ENCODE measurements at regions of chr12 and their contacts with region 1.

Region 1: GRCh38 chr12:124321040-124321481 is 26.2 kb downstream of the RFLNA start:
- DNase-seq: peak; percentile 91
- H3K4me3 Mint-ChIP-seq: no peak overlapping the region
- H3K27ac Mint-ChIP-seq: no peak overlapping the region
- H3K4me1 Mint-ChIP-seq: no peaks in the 10 kb centered on the region
- H3K27me3 Mint-ChIP-seq: no peaks in the 10 kb centered on the region

Region 2: DNA sequence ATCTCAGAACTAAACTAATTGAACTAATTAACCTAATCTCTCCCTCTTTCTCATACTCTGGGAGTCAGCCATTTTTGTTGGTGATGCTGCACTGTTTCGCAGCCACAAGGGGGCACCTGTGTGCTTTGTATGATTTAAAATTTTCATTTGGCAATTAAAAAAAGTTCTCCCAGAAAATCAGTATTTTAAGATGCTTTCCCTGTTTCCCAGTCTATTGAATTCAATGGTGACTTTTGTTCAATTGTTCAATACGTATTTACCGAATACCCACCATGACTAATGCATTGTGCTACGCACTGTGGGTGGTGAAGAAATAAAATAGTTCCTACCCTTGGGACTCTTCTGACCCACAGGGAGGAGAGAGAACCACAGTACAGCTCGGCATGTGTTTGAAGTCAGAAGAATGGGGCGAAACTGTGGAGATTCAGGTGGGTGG is 284.4 kb before region 1 on chr12:
- intact Hi-C with region 1: loop called (anchors 1 kb)
- DNase-seq: peak; percentile 77
- H3K4me3 Mint-ChIP-seq: no peak overlapping the region
- H3K27ac Mint-ChIP-seq: no peak overlapping the region
- H3K4me1 Mint-ChIP-seq: no peaks in the 10 kb centered on the region
- H3K27me3 Mint-ChIP-seq: peaks cover 26% of the 10 kb centered on the region

Region 3: GRCh38 chr12:124162151-124162989 is 158.7 kb before region 1 on chr12:
- intact Hi-C with region 1: loop called (anchors 1 kb)
- DNase-seq: peak; percentile 58
- H3K4me3 Mint-ChIP-seq: no peak overlapping the region
- H3K27ac Mint-ChIP-seq: no peak overlapping the region
- H3K4me1 Mint-ChIP-seq: no peaks in the 10 kb centered on the region
- H3K27me3 Mint-ChIP-seq: no peaks in the 10 kb centered on the region

Region 4: DNA sequence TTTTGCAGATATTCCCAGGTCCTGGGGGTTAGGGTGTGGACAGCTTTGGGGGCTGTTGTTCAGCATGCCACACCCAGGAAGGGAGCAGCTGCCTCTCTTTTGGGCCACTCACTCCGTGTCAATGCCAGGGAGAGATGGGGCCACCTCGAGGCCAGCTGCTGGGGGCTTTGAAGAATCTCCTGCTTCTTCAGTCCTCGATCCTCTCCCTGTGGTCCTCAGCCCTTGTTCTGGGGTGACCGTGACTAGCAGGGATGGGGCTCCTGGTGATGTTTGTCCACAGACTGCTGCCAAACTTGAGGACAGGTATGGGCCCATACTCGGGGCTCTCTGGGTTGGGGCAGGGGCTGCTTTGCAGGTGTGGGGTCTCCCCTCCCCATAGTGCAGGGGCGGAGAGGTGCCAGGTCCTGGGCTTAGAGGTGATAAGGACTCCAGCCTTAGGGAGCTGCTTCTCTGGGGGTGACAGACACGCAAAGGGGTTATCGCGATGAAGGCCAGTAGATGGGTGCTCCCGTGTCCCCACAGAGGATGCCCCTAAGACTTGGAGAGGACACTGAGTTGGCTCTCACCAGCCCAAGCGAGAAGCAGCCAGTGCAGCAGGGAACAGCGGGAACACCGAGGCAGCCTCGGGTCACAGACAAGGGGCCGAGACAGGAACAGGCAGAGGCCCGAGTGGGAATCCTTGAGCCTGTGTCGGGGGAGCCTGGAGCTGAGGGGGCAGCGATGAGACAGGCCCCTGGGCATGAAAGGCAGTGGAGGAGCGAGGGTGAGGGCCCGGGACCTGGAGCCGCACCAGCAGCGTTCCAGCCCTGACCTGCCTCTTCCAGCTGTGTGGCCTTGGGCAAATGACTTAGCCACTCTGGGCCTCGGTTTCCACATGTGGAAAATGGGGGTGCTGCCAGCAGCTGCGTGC is 15.0 kb before region 1 on chr12:
- intact Hi-C with region 1: no loop called
- DNase-seq: no peak
- H3K4me3 Mint-ChIP-seq: no peak overlapping the region
- H3K27ac Mint-ChIP-seq: no peak overlapping the region
- H3K4me1 Mint-ChIP-seq: no peaks in the 10 kb centered on the region
- H3K27me3 Mint-ChIP-seq: no peaks in the 10 kb centered on the region